Natural killer cell (primary cell): ENCODE measurements at regions of chr11 and their contacts with region 1.

Region 1: GRCh38 chr11:66694732-66695207 is 17.1 kb upstream of the RBM4B start:
- DNase-seq: peak; percentile 74 to 92
- ATAC-seq: peak; percentile 82 to 98 (median 96)
- H3K4me3 ChIP-seq: no peak overlapping the region
- H3K4me3 Mint-ChIP-seq: no peak overlapping the region
- H3K27ac ChIP-seq: no peak overlapping the region
- H3K27ac Mint-ChIP-seq: peak overlapping the region in 1 of 2 donors; percentile 44
- H3K4me1 ChIP-seq: peaks cover 5% of the 10 kb centered on the region
- H3K4me1 Mint-ChIP-seq: peaks cover 0 to 11% of the 10 kb centered on the region in 2 donors
- H3K27me3 ChIP-seq: no peaks in the 10 kb centered on the region
- H3K27me3 Mint-ChIP-seq: no peaks in the 10 kb centered on the region
- CTCF ChIP-seq: peak; percentile 74

Region 2: DNA sequence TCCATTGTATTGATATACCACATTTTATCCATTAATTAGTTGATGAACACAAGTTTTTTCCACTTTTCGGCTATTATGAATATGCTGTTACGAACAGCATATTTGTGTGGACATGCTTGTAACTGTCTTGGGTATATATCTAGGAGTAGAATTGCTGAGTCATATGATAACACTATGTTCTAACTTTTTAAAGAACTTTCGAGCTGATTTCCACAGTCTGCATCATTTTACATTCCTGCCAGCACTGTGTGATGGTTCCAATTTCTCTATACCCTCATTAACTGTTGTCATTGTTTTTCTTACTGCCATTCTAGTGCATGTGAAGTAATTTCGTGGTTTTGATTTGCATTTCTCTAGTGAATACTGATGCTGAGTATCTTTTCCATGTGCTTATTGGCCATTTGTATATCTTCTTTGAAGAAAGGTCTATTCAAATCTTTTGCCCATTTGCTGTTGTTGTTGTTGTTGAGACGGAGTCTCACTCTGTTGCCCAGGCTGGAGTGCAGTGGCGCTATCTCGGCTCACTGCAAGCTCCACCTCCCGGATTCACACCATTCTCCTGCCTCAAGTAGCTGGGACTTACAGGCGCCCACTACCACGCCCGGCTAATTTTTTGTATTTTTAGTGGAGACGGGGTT is 141.1 kb after region 1 on chr11:
- intact Hi-C with region 1: loop called (anchors 1 kb)
- DNase-seq: no peak
- ATAC-seq: no peak
- H3K4me3 ChIP-seq: no peak overlapping the region
- H3K4me3 Mint-ChIP-seq: no peak overlapping the region
- H3K27ac ChIP-seq: no peak overlapping the region
- H3K27ac Mint-ChIP-seq: peak overlapping the region in 1 of 2 donors; percentile 29
- H3K4me1 ChIP-seq: peaks cover 8% of the 10 kb centered on the region
- H3K4me1 Mint-ChIP-seq: peaks cover 23 to 27% of the 10 kb centered on the region in 2 donors
- H3K27me3 ChIP-seq: no peaks in the 10 kb centered on the region
- H3K27me3 Mint-ChIP-seq: no peaks in the 10 kb centered on the region
- CTCF ChIP-seq: no peak

Region 3: GRCh38 chr11:66883016-66883968 is 188.5 kb after region 1 on chr11:
- intact Hi-C with region 1: loop called (anchors 1 kb)
- DNase-seq: peak; percentile 44 to 68
- ATAC-seq: peak in 2 of 3 donors; percentile 34 to 64
- H3K4me3 ChIP-seq: no peak overlapping the region
- H3K4me3 Mint-ChIP-seq: no peak overlapping the region
- H3K27ac ChIP-seq: no peak overlapping the region
- H3K27ac Mint-ChIP-seq: no peak overlapping the region
- H3K4me1 ChIP-seq: peaks cover 7% of the 10 kb centered on the region
- H3K4me1 Mint-ChIP-seq: peaks cover 0 to 11% of the 10 kb centered on the region in 2 donors
- H3K27me3 ChIP-seq: no peaks in the 10 kb centered on the region
- H3K27me3 Mint-ChIP-seq: peaks cover 0 to 2% of the 10 kb centered on the region in 2 donors
- CTCF ChIP-seq: peak; percentile 53

Region 4: GRCh38 chr11:67071420-67072284 is 376.9 kb after region 1 on chr11:
- intact Hi-C with region 1: loop called (anchors 1 kb)
- DNase-seq: peak; percentile 68 to 82
- ATAC-seq: peak; percentile 90 to 99 (median 98)
- H3K4me3 ChIP-seq: peak overlapping the region; percentile 5
- H3K4me3 Mint-ChIP-seq: peak overlapping the region; percentile 74
- H3K27ac ChIP-seq: no peak overlapping the region
- H3K27ac Mint-ChIP-seq: no peak overlapping the region
- H3K4me1 ChIP-seq: peaks cover 9% of the 10 kb centered on the region
- H3K4me1 Mint-ChIP-seq: peaks cover 0 to 7% of the 10 kb centered on the region in 2 donors
- H3K27me3 ChIP-seq: peaks cover 3% of the 10 kb centered on the region
- H3K27me3 Mint-ChIP-seq: peaks cover 0 to 2% of the 10 kb centered on the region in 2 donors
- CTCF ChIP-seq: peak; percentile 87

Region 5: GRCh38 chr11:67572747-67573419 is 878.1 kb after region 1 on chr11:
- intact Hi-C with region 1: no loop called
- DNase-seq: peak; percentile 31 to 60
- ATAC-seq: peak in 2 of 3 donors; percentile 34 to 44
- H3K4me3 ChIP-seq: no peak overlapping the region
- H3K4me3 Mint-ChIP-seq: no peak overlapping the region
- H3K27ac ChIP-seq: no peak overlapping the region
- H3K27ac Mint-ChIP-seq: no peak overlapping the region
- H3K4me1 ChIP-seq: no peaks in the 10 kb centered on the region
- H3K4me1 Mint-ChIP-seq: peaks cover 0 to 5% of the 10 kb centered on the region in 2 donors
- H3K27me3 ChIP-seq: no peaks in the 10 kb centered on the region
- H3K27me3 Mint-ChIP-seq: peaks cover 0 to 6% of the 10 kb centered on the region in 2 donors
- CTCF ChIP-seq: peak; percentile 65